ENCODE measurements at regions of chr18 and their contacts with region 1.

Region 1: GRCh38 chr18:35497370-35498197 is at the start of gene INO80C:
- DNase-seq: peak; percentile 98

Region 2: GRCh38 chr18:35240664-35241447 is 256.7 kb before region 1 on chr18 and contains the start of gene ZNF397:
- CTCF ChIA-PET with region 1: no interaction called
- POLR2A ChIA-PET with region 1: interaction called, 12 read pairs
- DNase-seq: peak; percentile 100

Region 3: GRCh38 chr18:35324926-35325655 is 172.5 kb before region 1 on chr18:
- CTCF ChIA-PET with region 1: no interaction called
- POLR2A ChIA-PET with region 1: no interaction called
- DNase-seq: no peak

Region 4: DNA sequence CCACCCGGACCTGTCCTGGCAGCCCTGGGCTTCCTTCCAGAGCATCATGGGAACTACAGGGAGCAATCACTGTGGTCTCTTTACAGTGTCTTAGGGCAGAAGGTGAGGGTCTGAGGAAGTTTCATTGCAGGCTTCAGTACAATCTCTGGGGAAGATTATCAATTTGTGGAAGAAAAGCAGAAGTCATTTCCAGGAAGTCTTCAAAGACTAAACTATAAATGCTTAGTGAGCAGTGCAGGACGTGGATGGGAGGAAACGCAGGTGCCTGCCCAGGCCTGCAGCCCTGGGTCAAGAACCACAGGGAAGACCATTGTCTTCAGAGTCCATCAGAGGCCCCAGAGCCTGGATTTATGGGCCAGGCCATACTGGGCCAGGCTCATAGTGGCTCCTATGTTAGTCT is 54.1 kb before region 1 on chr18:
- CTCF ChIA-PET with region 1: no interaction called
- POLR2A ChIA-PET with region 1: no interaction called
- DNase-seq: no peak

Region 5: GRCh38 chr18:35464831-35465279 is 32.7 kb before region 1 on chr18:
- CTCF ChIA-PET with region 1: no interaction called
- POLR2A ChIA-PET with region 1: no interaction called
- DNase-seq: no peak

Region 6: GRCh38 chr18:35513181-35513936 is 15.8 kb after region 1 on chr18:
- CTCF ChIA-PET with region 1: interaction called, 4 read pairs
- POLR2A ChIA-PET with region 1: interaction called, 33 read pairs
- DNase-seq: peak; percentile 56

Region 7: DNA sequence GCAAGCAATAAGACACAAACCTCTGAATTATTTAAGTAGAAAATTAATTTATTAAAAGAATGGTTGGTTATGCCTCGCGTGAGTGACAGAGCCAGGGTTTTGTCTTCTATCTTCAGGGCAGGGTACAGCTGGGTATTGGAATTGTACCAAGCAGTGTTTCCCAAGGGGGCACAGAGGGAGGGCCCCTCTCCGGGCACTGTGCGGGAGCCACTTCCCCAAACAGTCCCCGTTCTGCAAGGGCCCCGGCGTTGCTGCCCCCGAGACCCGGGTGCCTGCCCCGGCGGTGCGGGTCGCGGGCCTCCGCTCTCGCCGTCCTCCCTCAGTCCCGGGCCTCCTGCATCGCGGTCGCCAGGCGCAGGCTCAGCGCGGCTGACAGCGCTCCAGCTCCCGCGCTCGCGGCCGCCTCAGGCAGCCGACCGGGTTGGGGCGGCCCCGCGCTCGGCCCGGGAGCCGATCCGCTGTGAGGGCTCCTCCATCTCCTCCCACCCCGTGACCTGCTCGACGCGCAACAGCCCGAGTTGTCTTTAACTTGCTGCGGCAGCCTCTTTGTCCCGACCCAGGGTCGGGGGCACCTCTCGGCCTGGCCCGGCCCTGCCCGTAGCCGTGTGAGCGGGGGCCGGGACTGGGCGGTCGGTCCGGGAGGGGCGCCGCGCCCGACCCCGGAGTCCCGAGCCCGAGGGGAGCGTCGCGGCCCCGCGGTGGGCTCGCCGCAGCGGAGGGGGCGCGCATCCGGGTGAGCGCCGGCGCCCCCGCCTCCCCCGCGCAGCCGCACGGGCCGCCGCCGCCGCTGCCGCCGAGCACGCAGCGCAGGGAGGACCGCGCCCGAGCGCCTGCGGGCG is 83.3 kb after region 1 on chr18:
- CTCF ChIA-PET with region 1: no interaction called
- POLR2A ChIA-PET with region 1: interaction called, 14 read pairs
- DNase-seq: peak; percentile 83

Region 8: GRCh38 chr18:35713545-35713944 is 216.0 kb after region 1 on chr18:
- CTCF ChIA-PET with region 1: interaction called, 11 read pairs
- POLR2A ChIA-PET with region 1: no interaction called
- DNase-seq: no peak